Right cardiac atrium (tissue), 5 donors: ENCODE measurements at regions of chr1 and their contacts with region 1.

Region 1: GRCh38 chr1:176843352-176844297 is 320.9 kb downstream of the ASTN1 start:
- DNase-seq: peak in 2 of 3 donors; percentile 25 to 68
- ATAC-seq: peak; percentile 57 to 76
- H3K4me3 ChIP-seq: no peak overlapping the region
- H3K27ac ChIP-seq: no peak overlapping the region
- H3K4me1 ChIP-seq: peaks cover 2% of the 10 kb centered on the region
- H3K27me3 ChIP-seq: no peaks in the 10 kb centered on the region

Region 2: DNA sequence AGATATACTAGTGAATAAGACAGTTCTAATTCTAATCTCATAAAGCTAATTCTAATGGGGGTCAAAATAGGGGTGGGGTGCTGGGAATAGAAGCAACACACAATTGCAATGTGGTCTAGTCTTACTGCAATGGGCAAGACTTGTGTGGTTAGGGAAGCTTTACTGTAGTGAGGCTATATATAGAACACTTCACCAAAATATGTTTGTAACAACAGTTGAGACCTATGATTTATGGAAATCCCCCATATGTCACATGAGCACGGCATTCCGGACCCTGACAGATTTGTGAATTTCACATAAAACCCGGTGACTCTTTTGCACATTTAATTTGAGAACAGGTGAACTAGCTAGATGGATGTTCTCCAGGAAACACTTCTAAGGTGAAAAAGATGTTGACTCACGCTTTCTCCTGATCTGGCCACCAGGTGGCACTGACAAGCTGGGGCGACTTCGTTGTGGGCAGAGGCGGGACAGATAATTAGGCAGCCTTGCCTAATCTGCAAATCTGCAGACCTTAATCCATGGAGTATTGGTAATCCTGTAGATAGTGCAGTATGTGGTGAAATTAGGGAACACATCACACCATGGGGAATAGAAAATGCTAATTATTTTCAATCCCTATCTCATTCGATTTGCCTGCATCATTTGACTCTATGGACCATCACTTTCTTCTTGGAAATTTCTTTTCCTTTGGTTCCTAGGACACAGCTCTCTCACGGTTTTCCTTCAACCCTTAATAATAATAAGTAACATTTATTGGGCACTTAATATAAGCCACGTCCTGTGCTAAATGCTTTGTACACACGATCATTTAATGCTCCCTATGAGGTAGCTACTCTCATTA is 1688.8 kb before region 1 on chr1:
- intact Hi-C with region 1: loop called in 1 of 4 experiments (anchors 10 kb)
- DNase-seq: peak; percentile 67 to 88 (median 82)
- ATAC-seq: peak; percentile 46 to 65
- H3K4me3 ChIP-seq: no peak overlapping the region
- H3K27ac ChIP-seq: no peak overlapping the region
- H3K4me1 ChIP-seq: no peaks in the 10 kb centered on the region
- H3K27me3 ChIP-seq: no peaks in the 10 kb centered on the region

Region 3: DNA sequence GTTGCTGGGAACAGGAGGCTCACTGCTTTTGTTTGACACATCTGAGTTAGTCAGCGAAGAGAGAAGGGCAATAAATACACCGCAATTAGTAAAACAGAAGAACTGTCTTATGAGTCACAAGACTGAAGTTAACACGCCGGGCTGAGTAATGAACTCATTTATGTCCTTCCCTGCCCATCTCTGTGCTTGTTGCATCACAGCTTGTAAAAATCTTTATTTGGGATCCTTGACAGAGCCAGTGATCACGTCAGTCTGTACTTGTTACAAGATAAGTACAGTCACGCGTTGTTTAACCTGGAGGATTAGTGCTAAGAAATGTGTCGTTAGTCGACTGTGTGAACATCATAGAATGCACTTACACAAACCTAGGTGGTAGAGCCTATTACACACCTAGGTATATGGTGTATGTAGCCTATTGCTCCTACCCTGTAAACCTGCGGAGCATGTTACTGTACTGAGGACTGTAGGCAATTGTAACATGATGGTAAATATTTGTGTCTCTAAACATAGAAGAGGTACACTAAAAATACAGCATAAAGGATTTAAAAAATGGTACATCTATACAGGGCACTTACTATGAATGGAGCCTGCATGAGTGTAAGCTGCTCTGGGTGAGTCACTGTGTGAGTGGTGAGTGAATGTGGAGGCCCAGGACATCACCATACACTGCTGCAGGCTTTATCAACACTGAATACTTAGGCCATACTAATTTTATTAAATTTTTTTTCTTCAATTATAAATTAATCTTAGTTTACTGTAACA is 1372.4 kb before region 1 on chr1:
- intact Hi-C with region 1: loop called in 1 of 4 experiments (anchors 10 kb)
- DNase-seq: no peak
- ATAC-seq: no peak
- H3K4me3 ChIP-seq: no peak overlapping the region
- H3K27ac ChIP-seq: no peak overlapping the region
- H3K4me1 ChIP-seq: no peaks in the 10 kb centered on the region
- H3K27me3 ChIP-seq: no peaks in the 10 kb centered on the region

Region 4: DNA sequence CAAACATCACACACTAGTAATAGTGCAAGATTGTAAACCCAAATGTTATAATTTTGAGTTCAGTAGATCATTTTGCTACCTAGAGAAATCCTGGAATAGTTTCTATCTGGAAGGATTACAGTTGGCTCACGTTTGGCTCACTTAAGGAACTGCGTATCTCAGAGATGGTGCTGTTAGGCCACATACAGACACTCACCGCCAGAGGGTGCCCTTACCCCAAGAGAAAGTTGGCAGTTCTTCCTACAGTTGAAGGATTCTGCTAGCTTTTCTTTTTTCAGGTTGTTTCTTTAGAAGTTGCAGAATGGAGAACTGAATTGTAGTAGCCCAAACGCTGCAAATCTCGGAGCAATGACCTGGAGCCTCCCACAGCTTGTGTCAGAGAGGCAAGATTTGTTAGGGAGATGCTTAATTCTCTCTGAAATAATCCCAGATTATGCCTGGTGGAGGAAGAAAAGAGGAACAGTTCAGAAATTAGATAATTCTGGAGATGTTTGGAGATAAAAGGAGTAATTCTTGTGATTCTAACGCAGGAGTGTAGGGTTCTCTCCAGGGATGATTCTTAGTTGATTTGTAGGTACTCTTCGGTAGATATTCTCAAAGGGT is 468.6 kb before region 1 on chr1:
- intact Hi-C with region 1: loop called in 2 of 4 experiments (anchors 5 kb)
- DNase-seq: peak; percentile 60 to 89 (median 79)
- ATAC-seq: peak; percentile 80 to 82
- H3K4me3 ChIP-seq: no peak overlapping the region
- H3K27ac ChIP-seq: no peak overlapping the region
- H3K4me1 ChIP-seq: no peaks in the 10 kb centered on the region
- H3K27me3 ChIP-seq: no peaks in the 10 kb centered on the region

Region 5: DNA sequence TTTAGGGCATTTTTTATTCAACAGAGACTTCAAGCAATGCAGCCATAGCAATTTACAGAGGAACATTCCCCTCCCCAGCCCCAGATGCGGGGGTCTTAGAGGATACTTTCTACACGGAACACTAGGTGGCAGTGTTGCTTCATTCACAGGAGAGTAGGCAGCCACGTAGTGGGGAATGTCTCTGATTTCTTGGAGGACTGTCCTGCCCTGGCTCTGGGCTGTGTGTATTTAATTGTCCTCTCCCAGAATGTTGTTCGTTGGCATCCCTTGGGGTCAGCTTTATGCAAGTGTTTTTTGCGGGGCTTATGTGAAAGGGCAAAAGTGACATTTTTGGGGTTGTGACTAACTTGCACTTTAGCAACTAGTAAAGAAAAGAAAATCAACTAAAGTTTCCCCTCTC is 283.7 kb before region 1 on chr1:
- intact Hi-C with region 1: loop called (anchors 2 to 5 kb)
- DNase-seq: peak in 1 of 3 donors; percentile 22
- ATAC-seq: peak; percentile 90 to 91
- H3K4me3 ChIP-seq: no peak overlapping the region
- H3K27ac ChIP-seq: no peak overlapping the region
- H3K4me1 ChIP-seq: peaks cover 3% of the 10 kb centered on the region
- H3K27me3 ChIP-seq: no peaks in the 10 kb centered on the region

Region 6: DNA sequence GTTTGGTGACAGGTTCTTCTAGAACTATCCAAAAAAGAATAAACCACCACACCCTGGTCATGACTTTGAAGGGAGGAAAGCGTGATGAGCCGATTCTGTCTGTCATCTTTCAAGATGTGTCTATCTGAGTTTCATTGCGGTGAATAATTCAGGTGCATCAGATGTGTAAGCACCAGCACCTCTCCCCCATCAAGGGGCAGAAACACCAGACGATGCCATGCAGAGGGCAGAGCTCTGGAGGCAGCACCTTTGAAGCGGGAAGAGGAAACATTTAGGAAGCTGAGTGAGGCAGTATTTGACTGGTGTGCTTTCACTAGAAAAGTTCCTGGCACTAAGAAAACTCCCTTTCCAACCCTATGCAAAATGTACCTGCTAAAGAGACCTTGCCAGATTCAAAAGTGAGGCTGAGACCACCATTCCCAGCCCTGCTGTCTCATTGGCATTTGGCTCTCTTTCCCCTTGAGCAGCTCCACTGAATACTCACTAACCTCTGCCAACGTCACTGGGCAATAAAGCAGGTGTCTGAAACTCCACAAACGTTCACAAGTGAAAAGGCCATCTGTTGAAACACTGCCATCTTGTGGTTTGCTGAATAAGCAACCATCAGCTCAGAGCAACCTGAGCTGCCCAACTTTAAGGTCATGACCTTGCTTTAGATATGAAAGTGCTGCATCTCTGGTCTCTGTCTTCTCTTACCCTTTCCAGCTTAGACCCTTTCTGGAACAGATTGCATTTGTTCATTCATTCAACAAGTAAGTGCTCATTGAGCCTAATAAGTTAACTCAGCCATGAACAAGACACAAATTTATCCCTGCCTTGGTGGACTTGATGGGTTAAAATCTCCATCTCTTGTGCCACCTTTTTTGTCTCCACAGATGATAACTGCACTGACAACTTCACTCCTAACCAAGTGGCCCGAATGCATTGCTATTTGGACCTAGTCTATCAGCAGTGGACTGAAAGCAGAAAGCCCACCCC is 152.1 kb before region 1 on chr1:
- intact Hi-C with region 1: loop called in 1 of 4 experiments (anchors 10 kb)
- DNase-seq: no peak
- ATAC-seq: peak; percentile 53 to 62
- H3K4me3 ChIP-seq: no peak overlapping the region
- H3K27ac ChIP-seq: peak overlapping the region; percentile 86
- H3K4me1 ChIP-seq: no peaks in the 10 kb centered on the region
- H3K27me3 ChIP-seq: no peaks in the 10 kb centered on the region